Panc1 (cell line): ENCODE measurements at regions of chr14 and their contacts with region 1.

Region 1: GRCh38 chr14:35883677-35884293 is 57.6 kb downstream of the BRMS1L start:
- DNase-seq: peak; percentile 20
- ATAC-seq: no peak
- H3K4me3 ChIP-seq: no peak overlapping the region
- H3K27ac ChIP-seq: no peak overlapping the region
- H3K4me1 ChIP-seq: no peaks in the 10 kb centered on the region
- H3K27me3 ChIP-seq: no peaks in the 10 kb centered on the region
- CTCF ChIP-seq: peak; percentile 75

Region 2: GRCh38 chr14:35835208-35835982 is 48.4 kb before region 1 on chr14:
- CTCF ChIA-PET with region 1: no interaction called
- POLR2A ChIA-PET with region 1: no interaction called
- in situ Hi-C with region 1: no loop called
- intact Hi-C with region 1: no loop called
- DNase-seq: no peak
- ATAC-seq: no peak
- H3K4me3 ChIP-seq: no peak overlapping the region
- H3K27ac ChIP-seq: no peak overlapping the region
- H3K4me1 ChIP-seq: no peaks in the 10 kb centered on the region
- H3K27me3 ChIP-seq: no peaks in the 10 kb centered on the region
- CTCF ChIP-seq: no peak

Region 3: GRCh38 chr14:35944847-35945246 is 61.1 kb after region 1 on chr14:
- CTCF ChIA-PET with region 1: interaction called, 6 read pairs
- POLR2A ChIA-PET with region 1: no interaction called
- in situ Hi-C with region 1: no loop called
- intact Hi-C with region 1: loop called (anchors 10 kb)
- DNase-seq: no peak
- ATAC-seq: no peak
- H3K4me3 ChIP-seq: no peak overlapping the region
- H3K27ac ChIP-seq: no peak overlapping the region
- H3K4me1 ChIP-seq: no peaks in the 10 kb centered on the region
- H3K27me3 ChIP-seq: no peaks in the 10 kb centered on the region
- CTCF ChIP-seq: peak; percentile 34; the same call in 1 of the 2 replicates

Region 4: DNA sequence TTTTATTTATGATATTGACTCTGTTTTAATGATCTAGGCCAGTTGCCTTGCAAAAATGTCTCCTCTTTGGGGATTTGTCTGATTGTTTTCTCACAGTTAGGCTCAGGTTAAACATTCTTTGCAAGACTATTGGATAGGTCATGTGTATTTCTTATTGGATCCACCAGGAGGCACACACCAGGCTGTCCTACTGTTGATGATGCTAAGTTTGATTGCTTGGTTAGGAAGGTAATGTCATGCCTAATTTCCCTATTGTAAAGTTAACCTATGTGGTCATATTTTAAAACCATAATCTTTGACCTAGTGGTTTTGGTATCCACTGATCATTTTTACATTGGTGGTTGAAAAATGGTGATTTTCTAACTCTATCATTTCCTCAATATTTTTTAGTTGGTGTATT is 79.4 kb after region 1 on chr14:
- CTCF ChIA-PET with region 1: no interaction called
- POLR2A ChIA-PET with region 1: no interaction called
- in situ Hi-C with region 1: no loop called
- intact Hi-C with region 1: no loop called
- DNase-seq: no peak
- ATAC-seq: no peak
- H3K4me3 ChIP-seq: no peak overlapping the region
- H3K27ac ChIP-seq: no peak overlapping the region
- H3K4me1 ChIP-seq: no peaks in the 10 kb centered on the region
- H3K27me3 ChIP-seq: no peaks in the 10 kb centered on the region
- CTCF ChIP-seq: peak; percentile 12; the same call in 1 of the 2 replicates